OCI-LY7 (cell line): ENCODE measurements at regions of chr14 and their contacts with region 1.

Region 1: DNA sequence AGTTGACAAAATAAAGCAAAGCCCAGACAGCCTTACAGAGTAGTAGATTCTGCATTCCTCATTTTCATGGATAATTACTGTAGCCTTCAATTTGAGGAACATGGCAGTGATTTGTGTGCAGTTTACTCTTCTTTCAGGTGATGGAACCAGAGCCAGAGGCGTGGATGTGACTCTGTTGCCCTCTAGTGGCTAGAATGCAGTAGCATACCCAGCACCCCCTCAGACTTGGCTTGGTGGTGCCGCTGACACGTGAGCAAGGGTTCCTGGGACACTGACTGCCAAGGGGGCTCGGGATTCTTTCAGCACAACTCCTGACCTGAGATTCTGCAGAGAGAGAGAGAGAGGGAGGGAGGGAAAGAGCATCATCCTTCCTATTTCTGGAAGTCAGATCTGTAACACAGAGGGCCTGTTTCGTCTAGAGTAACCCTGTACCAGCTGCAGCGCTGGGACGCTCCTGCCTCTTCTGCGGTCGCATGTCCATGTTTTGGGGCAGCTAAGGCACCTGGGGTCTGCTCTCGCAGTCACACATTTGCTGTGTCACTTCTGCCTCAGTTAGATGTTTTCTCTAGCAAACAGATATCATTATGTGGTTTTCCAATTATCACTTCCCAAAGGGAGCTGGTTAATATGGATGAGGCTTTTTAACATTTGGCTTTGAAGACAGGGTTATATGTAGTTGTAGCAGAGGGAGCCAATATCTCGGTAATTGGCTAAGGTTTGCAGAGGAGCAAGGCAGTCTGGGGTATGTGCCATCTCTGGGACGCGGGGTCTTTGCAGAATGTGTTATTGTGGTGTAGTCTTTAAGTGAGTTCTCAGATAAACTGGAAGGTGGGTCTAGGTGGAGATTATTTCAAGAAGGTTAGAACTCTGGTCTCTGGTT is 428.1 kb downstream of the NRXN3 start:
- DNase-seq: peak; percentile 59
- H3K4me3 ChIP-seq: no peak overlapping the region
- H3K27ac ChIP-seq: no peak overlapping the region
- H3K4me1 ChIP-seq: no peaks in the 10 kb centered on the region
- CTCF ChIP-seq: peak; percentile 91

Region 2: DNA sequence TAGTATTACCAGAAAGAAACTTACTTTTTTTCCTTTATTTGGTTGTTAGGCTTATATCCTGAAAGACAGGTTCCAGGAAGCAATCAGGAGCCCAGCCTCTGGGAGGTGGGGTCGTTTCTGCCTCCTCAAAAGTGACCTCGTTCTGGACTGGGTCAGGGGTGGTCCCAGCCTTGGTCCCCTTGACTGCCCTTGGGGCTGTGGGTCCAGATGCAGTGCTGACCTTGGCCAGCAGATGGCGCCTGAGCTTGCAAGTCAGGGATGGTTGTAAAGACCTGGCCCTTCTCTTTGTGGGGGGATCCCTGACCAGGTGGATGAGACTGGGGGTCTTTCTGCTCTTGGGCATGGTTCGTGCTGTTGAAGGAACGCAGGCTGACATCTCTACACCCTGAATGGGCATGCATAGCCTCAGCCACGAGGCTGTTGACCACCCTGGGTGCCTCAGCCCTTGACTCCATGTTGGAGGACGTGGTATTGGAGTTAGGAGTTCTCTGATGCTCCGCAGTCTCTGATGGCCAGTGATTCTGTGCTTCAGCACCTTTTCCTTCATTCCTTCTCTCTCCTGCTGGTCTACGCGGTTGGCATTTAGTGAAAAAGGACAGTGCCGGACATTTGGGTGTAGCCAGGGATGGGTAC is 736.0 kb before region 1 on chr14:
- CTCF ChIA-PET with region 1: no interaction called
- POLR2A ChIA-PET with region 1: no interaction called
- intact Hi-C with region 1: loop called (anchors 5 kb)
- DNase-seq: peak; percentile 70
- H3K4me3 ChIP-seq: no peak overlapping the region
- H3K27ac ChIP-seq: no peak overlapping the region
- H3K4me1 ChIP-seq: no peaks in the 10 kb centered on the region
- CTCF ChIP-seq: peak; percentile 97

Region 3: GRCh38 chr14:78022059-78022458 is 576.2 kb before region 1 on chr14:
- CTCF ChIA-PET with region 1: no interaction called
- POLR2A ChIA-PET with region 1: no interaction called
- intact Hi-C with region 1: loop called (anchors 10 kb)
- DNase-seq: peak; percentile 61
- H3K4me3 ChIP-seq: no peak overlapping the region
- H3K27ac ChIP-seq: no peak overlapping the region
- H3K4me1 ChIP-seq: no peaks in the 10 kb centered on the region
- CTCF ChIP-seq: peak; percentile 85

Region 4: GRCh38 chr14:78448164-78449094 is 149.9 kb before region 1 on chr14:
- CTCF ChIA-PET with region 1: no interaction called
- POLR2A ChIA-PET with region 1: no interaction called
- intact Hi-C with region 1: loop called (anchors 1 kb)
- DNase-seq: peak; percentile 50
- H3K4me3 ChIP-seq: no peak overlapping the region
- H3K27ac ChIP-seq: no peak overlapping the region
- H3K4me1 ChIP-seq: no peaks in the 10 kb centered on the region
- CTCF ChIP-seq: peak; percentile 87

Region 5: DNA sequence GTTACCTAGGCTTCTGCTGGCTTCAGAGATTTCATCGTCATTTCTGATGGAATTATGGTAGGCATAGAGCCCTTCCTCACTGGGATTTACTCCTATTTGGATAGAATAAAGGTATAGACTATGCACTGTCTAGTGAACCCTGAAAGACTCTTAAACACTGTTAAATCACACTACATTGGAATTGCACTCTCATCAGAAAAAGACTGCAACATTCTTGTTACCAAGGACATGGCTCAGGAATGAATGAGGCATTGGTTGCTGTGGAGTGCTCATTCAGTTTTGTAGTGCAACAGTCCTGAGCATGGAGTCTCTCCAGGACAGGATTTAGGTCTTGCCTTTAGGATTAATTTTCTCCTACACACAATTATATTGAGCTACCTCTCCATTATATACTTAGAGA is 54.9 kb after region 1 on chr14:
- CTCF ChIA-PET with region 1: no interaction called
- POLR2A ChIA-PET with region 1: no interaction called
- intact Hi-C with region 1: no loop called
- DNase-seq: no peak
- H3K4me3 ChIP-seq: no peak overlapping the region
- H3K27ac ChIP-seq: no peak overlapping the region
- H3K4me1 ChIP-seq: no peaks in the 10 kb centered on the region
- CTCF ChIP-seq: no peak